ENCODE measurements at regions of chr6 and their contacts with region 1.

Region 1: GRCh38 chr6:26103770-26104456 is 16.7 kb downstream of the HFE start:
- DNase-seq: peak; percentile 92
- ATAC-seq: peak; percentile 89
- H3K4me3 Mint-ChIP-seq: peak overlapping the region; percentile 82
- H3K27ac Mint-ChIP-seq: peak overlapping the region; percentile 97
- H3K4me1 Mint-ChIP-seq: peaks cover 16% of the 10 kb centered on the region
- H3K27me3 Mint-ChIP-seq: no peaks in the 10 kb centered on the region

Region 2: DNA sequence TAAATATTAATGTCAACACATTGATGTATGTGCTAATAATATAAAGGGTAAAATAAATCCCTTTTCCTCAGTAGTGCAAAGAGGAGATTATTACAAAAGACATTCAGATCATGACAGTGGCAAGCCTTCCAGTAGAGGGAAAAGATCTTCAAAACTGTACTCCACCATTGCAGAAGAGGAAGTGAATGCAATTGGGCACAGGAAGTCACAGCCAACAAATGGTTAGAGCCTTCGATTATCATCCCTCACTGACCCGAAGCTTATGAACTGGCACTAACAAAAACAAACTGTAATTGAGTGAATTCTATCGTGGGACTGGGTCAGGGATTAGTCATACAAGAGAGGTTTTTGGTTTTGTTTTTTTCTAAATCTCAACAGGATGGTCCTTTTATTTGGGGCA is 491.2 kb before region 1 on chr6:
- CTCF ChIA-PET with region 1: no interaction called
- POLR2A ChIA-PET with region 1: no interaction called
- intact Hi-C with region 1: no loop called
- DNase-seq: no peak
- ATAC-seq: no peak
- H3K4me3 Mint-ChIP-seq: no peak overlapping the region
- H3K27ac Mint-ChIP-seq: no peak overlapping the region
- H3K4me1 Mint-ChIP-seq: no peaks in the 10 kb centered on the region
- H3K27me3 Mint-ChIP-seq: no peaks in the 10 kb centered on the region

Region 3: GRCh38 chr6:26045065-26045927 is 58.6 kb before region 1 on chr6:
- CTCF ChIA-PET with region 1: interaction called, 5 read pairs
- POLR2A ChIA-PET with region 1: interaction called, 13 read pairs
- intact Hi-C with region 1: loop called in 1 of 2 experiments (anchors 1 kb)
- DNase-seq: peak; percentile 83
- ATAC-seq: peak; percentile 63
- H3K4me3 Mint-ChIP-seq: peak overlapping the region; percentile 79
- H3K27ac Mint-ChIP-seq: peak overlapping the region; percentile 99
- H3K4me1 Mint-ChIP-seq: peaks cover 18% of the 10 kb centered on the region
- H3K27me3 Mint-ChIP-seq: no peaks in the 10 kb centered on the region

Region 4: GRCh38 chr6:26054857-26055669 is 48.9 kb before region 1 on chr6:
- CTCF ChIA-PET with region 1: interaction called, 376 read pairs
- POLR2A ChIA-PET with region 1: interaction called, 41 read pairs
- intact Hi-C with region 1: loop called (anchors 2 kb)
- DNase-seq: peak; percentile 91
- ATAC-seq: peak; percentile 70
- H3K4me3 Mint-ChIP-seq: peak overlapping the region; percentile 96
- H3K27ac Mint-ChIP-seq: peak overlapping the region; percentile 99
- H3K4me1 Mint-ChIP-seq: peaks cover 13% of the 10 kb centered on the region
- H3K27me3 Mint-ChIP-seq: no peaks in the 10 kb centered on the region

Region 5: GRCh38 chr6:26065952-26066380 is 37.9 kb before region 1 on chr6:
- CTCF ChIA-PET with region 1: interaction called, 376 read pairs
- POLR2A ChIA-PET with region 1: no interaction called
- intact Hi-C with region 1: no loop called
- DNase-seq: peak; percentile 72
- ATAC-seq: peak; percentile 95
- H3K4me3 Mint-ChIP-seq: no peak overlapping the region
- H3K27ac Mint-ChIP-seq: no peak overlapping the region
- H3K4me1 Mint-ChIP-seq: peaks cover 2% of the 10 kb centered on the region
- H3K27me3 Mint-ChIP-seq: no peaks in the 10 kb centered on the region

Region 6: DNA sequence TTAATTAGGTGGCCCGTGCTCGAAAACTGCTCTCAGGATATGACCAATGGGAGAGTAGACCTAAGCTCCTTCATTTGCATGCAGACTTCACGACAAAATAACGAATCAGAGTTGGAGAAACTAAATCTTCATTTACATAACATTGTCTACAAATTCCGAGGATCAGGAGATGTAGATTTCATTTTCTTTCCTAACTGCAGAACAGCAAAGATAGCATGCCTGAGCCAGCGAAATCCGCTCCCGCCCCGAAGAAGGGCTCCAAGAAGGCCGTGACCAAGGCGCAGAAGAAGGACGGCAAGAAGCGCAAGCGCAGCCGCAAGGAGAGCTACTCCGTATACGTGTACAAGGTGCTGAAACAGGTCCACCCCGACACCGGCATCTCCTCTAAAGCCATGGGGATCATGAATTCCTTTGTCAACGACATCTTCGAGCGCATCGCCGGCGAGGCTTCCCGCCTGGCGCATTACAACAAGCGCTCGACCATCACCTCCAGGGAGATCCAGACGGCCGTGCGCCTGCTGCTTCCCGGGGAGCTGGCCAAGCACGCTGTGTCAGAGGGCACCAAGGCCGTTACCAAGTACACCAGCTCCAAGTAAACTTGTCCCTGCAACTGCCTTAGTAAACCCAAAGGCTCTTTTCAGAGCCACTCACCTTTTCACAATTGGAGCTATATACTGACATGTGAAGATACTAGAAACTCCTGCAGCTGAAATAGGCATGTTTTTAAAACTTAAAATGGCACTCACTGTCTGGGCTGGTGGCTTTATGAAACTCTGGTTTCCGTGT is 79.9 kb after region 1 on chr6:
- CTCF ChIA-PET with region 1: no interaction called
- POLR2A ChIA-PET with region 1: interaction called, 19 read pairs
- intact Hi-C with region 1: no loop called
- DNase-seq: peak; percentile 82
- ATAC-seq: peak; percentile 80
- H3K4me3 Mint-ChIP-seq: peak overlapping the region; percentile 89
- H3K27ac Mint-ChIP-seq: peak overlapping the region; percentile 92
- H3K4me1 Mint-ChIP-seq: peaks cover 45% of the 10 kb centered on the region
- H3K27me3 Mint-ChIP-seq: no peaks in the 10 kb centered on the region

Measured in activated CD4-positive, alpha-beta T cell treated with anti-CD3 and anti-CD28 coated beads for 36 hours (primary cell).